Tibial artery (tissue), 4 donors: ENCODE measurements at regions of chr6 and their contacts with region 1.

Region 1: GRCh38 chr6:109925079-109925478 is 53.0 kb upstream of the GPR6 start:
- DNase-seq: no peak
- H3K4me3 ChIP-seq: no peak overlapping the region
- H3K27ac ChIP-seq: no peak overlapping the region
- H3K4me1 ChIP-seq: no peaks in the 10 kb centered on the region
- H3K27me3 ChIP-seq: no peaks in the 10 kb centered on the region
- CTCF ChIP-seq: no peak

Region 2: DNA sequence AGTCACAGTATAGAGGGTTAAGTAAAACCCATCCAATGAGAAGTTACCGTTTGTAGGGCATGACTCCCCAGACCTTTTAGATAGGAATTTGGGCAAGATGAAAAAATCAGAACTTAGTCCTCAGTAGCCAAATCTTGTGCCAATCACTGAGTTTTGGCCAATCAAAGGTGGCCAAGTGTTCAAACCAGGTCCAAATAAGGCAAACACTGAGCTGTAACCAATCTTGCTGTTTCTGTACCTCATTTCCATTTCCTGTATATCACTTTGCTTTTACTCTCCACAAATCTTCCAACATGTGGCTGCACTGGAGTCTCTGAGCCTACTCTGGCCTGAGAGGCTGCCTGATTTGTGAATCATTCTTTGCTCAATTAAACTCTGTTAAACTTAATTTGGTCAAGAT is 28.7 kb before region 1 on chr6:
- intact Hi-C with region 1: loop called (anchors 2 kb)
- DNase-seq: no peak
- H3K4me3 ChIP-seq: no peak overlapping the region
- H3K27ac ChIP-seq: no peak overlapping the region
- H3K4me1 ChIP-seq: no peaks in the 10 kb centered on the region
- H3K27me3 ChIP-seq: no peaks in the 10 kb centered on the region
- CTCF ChIP-seq: no peak